ENCODE measurements at regions of chr5 and their contacts with region 1.

Region 1: DNA sequence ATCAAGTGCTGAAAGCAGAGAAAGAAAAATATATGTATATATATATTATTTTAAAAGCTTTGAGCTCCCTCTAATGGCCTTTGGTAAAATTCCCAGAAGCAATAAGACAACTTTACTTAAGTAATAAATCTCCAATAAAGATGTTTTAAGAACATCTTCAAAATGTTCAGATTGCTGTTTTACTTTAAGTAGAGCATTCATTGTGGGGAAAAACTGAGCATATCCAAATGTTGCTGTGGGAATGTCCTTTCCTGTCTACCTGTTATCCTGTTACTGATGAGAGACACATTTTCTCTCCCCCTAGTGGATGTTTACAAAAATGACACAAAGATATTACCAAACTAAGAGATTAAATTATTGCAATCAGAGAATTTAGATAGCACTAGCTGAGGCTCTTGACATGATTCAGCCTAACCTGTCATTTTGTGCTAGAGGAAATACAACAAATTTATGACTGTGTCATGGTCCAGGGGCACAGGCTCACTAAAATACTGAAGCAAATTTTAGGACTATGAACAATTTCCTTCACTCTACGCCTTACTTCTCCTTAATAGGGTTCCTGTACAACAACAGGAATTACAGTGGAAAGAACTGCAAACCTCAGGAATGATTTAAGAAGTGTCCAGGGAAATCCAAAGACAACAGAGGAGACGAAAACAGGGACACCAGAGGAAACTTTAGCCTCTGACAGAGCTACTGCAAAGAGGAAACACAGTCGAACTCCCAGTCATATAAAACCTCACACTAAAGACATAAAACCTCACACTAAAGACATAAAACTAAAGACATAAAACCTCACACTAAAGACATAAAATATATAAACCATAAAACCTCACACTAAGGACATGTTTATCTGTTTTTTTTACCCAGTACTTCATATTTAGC is 24.3 kb upstream of the PRRC1 start:
- DNase-seq: no peak
- ATAC-seq: peak; percentile 47 to 80 (median 58)
- H3K4me3 ChIP-seq: no peak overlapping the region
- H3K27ac ChIP-seq: no peak overlapping the region
- H3K4me1 ChIP-seq: no peaks in the 10 kb centered on the region
- H3K27me3 ChIP-seq: no peaks in the 10 kb centered on the region
- CTCF ChIP-seq: peak; percentile 73

Region 2: DNA sequence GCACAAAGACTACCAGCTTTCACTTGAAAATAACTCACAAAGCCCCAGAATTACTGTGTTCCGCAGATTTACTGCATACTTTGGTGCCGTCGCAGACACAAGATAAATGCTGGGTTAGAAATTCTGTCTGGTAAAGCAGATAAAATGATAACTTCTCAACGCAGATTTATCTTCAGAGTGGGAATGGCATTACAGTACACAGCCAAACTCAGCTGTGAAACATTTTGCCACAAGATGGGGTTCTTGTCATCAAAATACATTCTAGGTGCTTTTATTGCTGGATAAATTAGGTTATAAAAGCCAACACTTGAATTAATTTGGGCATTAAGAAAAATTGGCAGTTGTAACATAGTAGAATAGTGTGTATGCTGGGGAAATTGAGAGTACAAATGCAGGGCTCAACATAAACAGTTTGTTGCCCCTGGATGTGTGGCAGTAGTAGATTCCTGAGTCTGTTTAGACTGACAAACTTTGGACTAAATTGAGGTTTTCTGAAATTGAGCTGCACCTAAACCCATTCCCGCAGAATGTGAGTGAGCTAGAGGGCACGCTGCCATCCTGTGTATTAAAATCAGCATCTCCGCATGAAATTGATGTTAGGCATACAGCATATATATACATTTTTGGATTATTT is 655.1 kb before region 1 on chr5:
- intact Hi-C with region 1: loop called in 1 of 2 experiments (anchors 5 kb)
- DNase-seq: no peak
- ATAC-seq: peak in 1 of 4 donors; percentile 63
- H3K4me3 ChIP-seq: no peak overlapping the region
- H3K27ac ChIP-seq: no peak overlapping the region
- H3K4me1 ChIP-seq: no peaks in the 10 kb centered on the region
- H3K27me3 ChIP-seq: no peaks in the 10 kb centered on the region
- CTCF ChIP-seq: peak; percentile 45

Region 3: DNA sequence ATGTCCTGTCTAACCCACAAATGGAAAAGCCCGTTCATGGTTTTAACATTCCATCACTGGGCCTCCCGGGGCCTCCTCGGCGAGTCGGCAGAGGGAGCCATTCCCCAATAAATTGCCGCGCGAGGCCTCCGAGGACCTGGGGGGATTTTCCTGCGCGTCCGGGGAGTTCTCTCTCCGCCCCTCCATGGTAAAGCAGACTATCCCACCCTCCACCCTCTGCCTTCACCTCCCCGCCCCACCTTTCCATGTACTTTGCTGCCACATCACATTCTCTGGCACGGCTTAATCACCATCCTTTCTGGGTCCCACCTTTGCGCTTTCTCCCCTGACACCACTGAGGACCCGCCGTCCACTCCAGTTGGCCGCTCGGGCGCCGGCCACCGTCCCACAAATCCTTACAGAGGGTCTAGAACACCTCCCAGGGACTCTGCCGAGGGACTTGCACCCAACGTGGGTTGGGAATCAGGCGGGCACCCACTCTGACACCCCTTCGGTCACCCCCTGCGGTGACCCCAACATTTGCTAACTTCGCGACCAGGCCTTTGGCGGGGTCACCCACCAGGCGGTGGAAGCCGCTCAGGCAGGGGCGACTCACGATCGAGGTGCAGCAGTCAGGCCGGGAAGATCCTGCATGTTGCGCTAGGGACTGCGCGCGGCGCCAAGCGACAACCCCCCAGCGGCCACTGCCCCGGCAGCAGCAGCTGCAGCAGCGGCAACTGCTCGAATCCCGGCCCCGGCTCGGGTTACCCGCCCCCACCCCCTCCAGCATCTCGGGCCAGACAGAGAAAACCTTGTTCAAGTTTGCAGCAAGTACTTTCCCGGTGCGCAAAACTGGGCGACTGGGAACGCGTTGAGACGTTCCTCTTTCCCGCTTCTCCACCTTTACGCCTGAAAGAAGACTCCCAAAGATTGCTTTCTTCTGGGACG is 202.8 kb before region 1 on chr5 and contains the start of gene MEGF10:
- intact Hi-C with region 1: loop called (anchors 1 to 5 kb)
- DNase-seq: peak; percentile 39 to 72
- ATAC-seq: peak; percentile 92 to 94 (median 93)
- H3K4me3 ChIP-seq: peak within 1 kb of the TSS; percentile 75
- H3K27ac ChIP-seq: peak within 1 kb of the TSS; percentile 67
- H3K4me1 ChIP-seq: no peaks in the 10 kb centered on the region
- H3K27me3 ChIP-seq: peaks cover 0 to 6% (median 0%) of the 10 kb centered on the region in 3 donors
- CTCF ChIP-seq: peak; percentile 71
- total RNA-seq, gene MEGF10: 1.6 to 23.6 (median 7.9) TPM

Region 4: GRCh38 chr5:127517480-127518318 is 24.6 kb after region 1 on chr5 and contains the start of gene PRRC1:
- intact Hi-C with region 1: loop called in 1 of 2 experiments (anchors 1 kb)
- DNase-seq: peak; percentile 84 to 90
- ATAC-seq: peak; percentile 93 to 97 (median 96)
- H3K4me3 ChIP-seq: peak within 1 kb of the TSS; percentile 96
- H3K27ac ChIP-seq: peak within 1 kb of the TSS; percentile 85
- H3K4me1 ChIP-seq: peaks cover 8% of the 10 kb centered on the region
- H3K27me3 ChIP-seq: no peaks in the 10 kb centered on the region
- CTCF ChIP-seq: no peak
- total RNA-seq, gene PRRC1: 14.0 to 26.6 (median 16.4) TPM

Measured in psoas muscle (tissue), 8 donors.